ENCODE measurements at regions of chr2 and their contacts with region 1.

Region 1: GRCh38 chr2:190328573-190329147 is 9.0 kb upstream of the HIBCH start:
- DNase-seq: no peak
- ATAC-seq: no peak
- H3K4me3 ChIP-seq: no peak overlapping the region
- H3K4me3 Mint-ChIP-seq: no peak overlapping the region
- H3K27ac ChIP-seq: no peak overlapping the region
- H3K27ac Mint-ChIP-seq: no peak overlapping the region
- H3K4me1 ChIP-seq: no peaks in the 10 kb centered on the region
- H3K4me1 Mint-ChIP-seq: no peaks in the 10 kb centered on the region
- H3K27me3 ChIP-seq: peaks cover 2% of the 10 kb centered on the region
- H3K27me3 Mint-ChIP-seq: peaks cover 47 to 61% of the 10 kb centered on the region in 2 donors
- CTCF ChIP-seq: no peak

Region 2: DNA sequence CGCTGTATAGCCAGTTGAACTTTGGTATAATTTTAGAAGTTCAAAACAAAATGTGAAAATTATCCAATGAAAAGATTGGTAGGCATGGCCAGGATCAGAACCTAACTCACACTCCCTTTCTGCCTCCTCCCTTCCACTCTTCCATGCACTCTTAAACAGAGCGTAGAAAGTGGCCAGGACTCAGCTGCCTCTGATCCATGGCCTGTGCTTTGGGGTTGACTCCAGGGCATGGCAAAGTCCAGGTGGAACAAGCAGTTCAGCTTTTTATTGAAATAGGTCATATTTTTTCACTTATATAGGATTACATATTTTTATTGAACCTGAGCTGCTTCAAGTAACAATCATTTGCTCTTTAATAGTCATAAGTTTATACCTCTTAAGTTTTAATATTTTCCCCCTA is 41.0 kb after region 1 on chr2:
- intact Hi-C with region 1: loop called (anchors 5 kb)
- DNase-seq: no peak
- ATAC-seq: no peak
- H3K4me3 ChIP-seq: no peak overlapping the region
- H3K4me3 Mint-ChIP-seq: no peak overlapping the region
- H3K27ac ChIP-seq: no peak overlapping the region
- H3K27ac Mint-ChIP-seq: no peak overlapping the region
- H3K4me1 ChIP-seq: no peaks in the 10 kb centered on the region
- H3K4me1 Mint-ChIP-seq: peaks cover 0 to 3% of the 10 kb centered on the region in 2 donors
- H3K27me3 ChIP-seq: no peaks in the 10 kb centered on the region
- H3K27me3 Mint-ChIP-seq: no peaks in the 10 kb centered on the region
- CTCF ChIP-seq: no peak

Region 3: GRCh38 chr2:190766595-190766994 is 437.9 kb after region 1 on chr2:
- intact Hi-C with region 1: no loop called
- DNase-seq: no peak
- ATAC-seq: no peak
- H3K4me3 ChIP-seq: no peak overlapping the region
- H3K4me3 Mint-ChIP-seq: no peak overlapping the region
- H3K27ac ChIP-seq: no peak overlapping the region
- H3K27ac Mint-ChIP-seq: no peak overlapping the region
- H3K4me1 ChIP-seq: no peaks in the 10 kb centered on the region
- H3K4me1 Mint-ChIP-seq: no peaks in the 10 kb centered on the region
- H3K27me3 ChIP-seq: no peaks in the 10 kb centered on the region
- H3K27me3 Mint-ChIP-seq: peaks cover 4 to 6% of the 10 kb centered on the region in 2 donors
- CTCF ChIP-seq: no peak